ENCODE measurements at regions of chr16 and their contacts with region 1.

Region 1: DNA sequence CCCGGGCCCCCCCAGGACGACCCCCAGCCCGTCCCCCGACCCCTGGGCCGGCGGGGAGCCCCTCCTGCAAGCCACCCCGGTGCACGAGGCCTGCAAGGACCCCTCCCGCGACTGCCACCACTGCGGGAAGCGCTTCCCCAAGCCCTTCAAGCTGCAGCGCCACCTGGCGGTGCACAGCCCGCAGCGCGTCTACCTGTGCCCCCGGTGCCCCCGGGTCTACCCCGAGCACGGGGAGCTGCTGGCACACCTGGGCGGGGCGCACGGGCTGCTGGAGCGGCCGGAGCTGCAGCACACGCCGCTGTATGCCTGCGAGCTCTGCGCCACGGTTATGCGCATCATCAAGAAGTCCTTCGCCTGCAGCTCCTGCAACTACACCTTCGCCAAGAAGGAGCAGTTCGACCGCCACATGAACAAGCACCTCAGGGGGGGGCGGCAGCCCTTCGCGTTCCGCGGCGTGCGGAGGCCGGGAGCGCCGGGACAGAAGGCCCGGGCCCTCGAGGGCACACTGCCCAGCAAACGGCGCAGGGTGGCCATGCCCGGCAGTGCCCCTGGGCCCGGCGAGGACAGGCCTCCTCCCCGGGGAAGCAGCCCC is 15.6 kb upstream of the ZFPM1 start:
- DNase-seq: peak in 1 of 2 donors; percentile 35
- H3K4me3 ChIP-seq: no peak overlapping the region
- H3K27ac ChIP-seq: no peak overlapping the region
- H3K4me1 ChIP-seq: no peaks in the 10 kb centered on the region
- H3K27me3 ChIP-seq: no peaks in the 10 kb centered on the region
- CTCF ChIP-seq: peak; percentile 82 to 88 (median 85)
- POLR2A ChIP-seq: peak in 1 of 2 donors; percentile 7

Region 2: DNA sequence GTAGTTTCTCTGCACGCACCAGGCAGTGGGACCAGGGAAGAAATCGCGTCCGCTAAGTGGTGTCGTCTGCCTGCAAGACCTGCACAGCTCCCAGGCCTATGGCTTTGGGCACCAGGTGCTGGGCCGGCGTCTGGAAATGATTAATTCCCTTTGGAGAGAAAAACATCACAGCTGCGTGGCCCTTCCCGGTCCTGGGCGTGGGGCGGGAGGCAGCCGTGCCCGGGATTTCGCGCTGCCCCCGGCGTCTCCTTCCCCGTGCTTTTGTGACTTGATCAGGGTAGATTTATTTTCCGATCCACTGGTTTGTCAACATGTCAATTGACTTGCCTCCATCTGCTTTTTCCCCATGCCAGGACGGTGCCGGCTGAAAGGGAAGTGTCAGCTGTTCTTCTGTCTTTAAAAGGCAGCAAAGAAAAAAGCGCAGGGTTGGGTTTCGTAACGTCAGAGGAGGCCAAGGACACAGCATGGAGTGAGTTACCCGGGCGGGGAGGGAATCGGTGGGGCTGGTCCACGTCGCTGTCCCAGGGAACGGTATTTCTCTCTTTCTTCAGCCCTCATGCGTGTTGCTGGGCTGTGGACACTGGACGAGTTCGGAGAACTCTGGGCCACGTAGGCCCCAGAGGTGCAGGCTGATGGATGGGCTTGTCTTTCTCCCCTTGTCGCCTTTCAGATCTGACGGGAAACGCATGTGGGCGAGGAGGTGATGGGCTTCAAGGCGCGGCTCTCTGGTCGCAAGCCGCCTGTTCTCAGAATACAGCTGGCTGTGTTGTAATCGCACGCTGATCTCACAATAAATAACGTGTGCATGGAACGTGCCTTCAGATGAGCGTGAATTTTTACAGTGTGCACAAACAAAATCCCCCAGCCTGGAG is 242.8 kb before region 1 on chr16:
- intact Hi-C with region 1: loop called (anchors 10 kb)
- DNase-seq: no peak
- H3K4me3 ChIP-seq: no peak overlapping the region
- H3K27ac ChIP-seq: no peak overlapping the region
- H3K4me1 ChIP-seq: no peaks in the 10 kb centered on the region
- H3K27me3 ChIP-seq: no peaks in the 10 kb centered on the region
- CTCF ChIP-seq: no peak
- POLR2A ChIP-seq: no peak

Region 3: DNA sequence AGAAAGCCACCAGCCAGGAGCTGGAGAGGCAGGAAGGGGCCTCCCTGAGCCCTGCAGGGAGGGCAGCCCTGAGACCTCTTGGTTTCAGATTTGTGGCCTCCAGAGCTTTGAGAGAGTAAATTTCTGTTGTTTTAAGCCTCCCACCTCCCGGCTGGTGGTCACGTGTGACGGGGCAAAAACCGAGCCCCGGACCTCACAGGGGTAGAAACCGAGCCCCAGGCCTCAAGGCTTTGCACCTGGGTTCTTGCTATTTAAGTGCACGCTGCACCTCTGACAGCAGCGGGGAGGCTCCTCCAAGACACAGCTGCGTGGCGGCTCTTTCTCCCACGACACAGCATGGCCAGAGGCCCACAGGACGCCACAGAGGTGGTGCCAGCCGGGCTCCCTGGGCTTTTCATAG is 115.3 kb after region 1 on chr16:
- intact Hi-C with region 1: no loop called
- DNase-seq: no peak
- H3K4me3 ChIP-seq: no peak overlapping the region
- H3K27ac ChIP-seq: no peak overlapping the region
- H3K4me1 ChIP-seq: no peaks in the 10 kb centered on the region
- H3K27me3 ChIP-seq: no peaks in the 10 kb centered on the region
- CTCF ChIP-seq: no peak
- POLR2A ChIP-seq: no peak

Measured in uterus (tissue), 4 donors.